ENCODE measurements at regions of chr9 and their contacts with region 1.

Region 1: GRCh38 chr9:88322906-88323566 is 65.2 kb upstream of the SPIN1 start:
- DNase-seq: peak; percentile 59
- ATAC-seq: peak; percentile 98
- H3K4me3 Mint-ChIP-seq: no peak overlapping the region
- H3K27ac Mint-ChIP-seq: peak overlapping the region; percentile 84
- H3K4me1 Mint-ChIP-seq: peaks cover 30% of the 10 kb centered on the region
- H3K27me3 Mint-ChIP-seq: no peaks in the 10 kb centered on the region

Region 2: GRCh38 chr9:88266416-88266815 is 56.6 kb before region 1 on chr9:
- CTCF ChIA-PET with region 1: no interaction called
- POLR2A ChIA-PET with region 1: no interaction called
- intact Hi-C with region 1: no loop called
- DNase-seq: no peak
- ATAC-seq: no peak
- H3K4me3 Mint-ChIP-seq: no peak overlapping the region
- H3K27ac Mint-ChIP-seq: no peak overlapping the region
- H3K4me1 Mint-ChIP-seq: peaks cover 3% of the 10 kb centered on the region
- H3K27me3 Mint-ChIP-seq: no peaks in the 10 kb centered on the region

Region 3: DNA sequence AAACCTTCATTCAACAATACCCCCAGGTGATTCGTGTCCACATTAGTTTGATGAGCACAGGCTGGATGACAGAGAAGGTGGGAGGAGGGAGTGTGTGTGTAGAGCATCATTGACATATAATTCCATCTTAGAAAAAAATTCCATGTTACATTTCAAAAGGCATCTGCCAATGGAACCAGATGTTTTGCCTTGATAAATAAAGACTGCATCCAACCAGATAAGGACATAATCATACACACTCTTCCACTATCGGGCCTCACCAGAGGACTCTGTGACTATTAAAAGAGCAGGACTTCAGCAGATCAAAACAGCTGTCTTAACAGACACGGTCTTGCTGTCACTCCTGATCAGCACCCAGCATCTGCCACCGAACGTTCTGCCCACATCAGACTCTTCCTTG is 31.2 kb before region 1 on chr9:
- CTCF ChIA-PET with region 1: no interaction called
- POLR2A ChIA-PET with region 1: no interaction called
- intact Hi-C with region 1: no loop called
- DNase-seq: no peak
- ATAC-seq: no peak
- H3K4me3 Mint-ChIP-seq: no peak overlapping the region
- H3K27ac Mint-ChIP-seq: no peak overlapping the region
- H3K4me1 Mint-ChIP-seq: no peaks in the 10 kb centered on the region
- H3K27me3 Mint-ChIP-seq: no peaks in the 10 kb centered on the region

Region 4: DNA sequence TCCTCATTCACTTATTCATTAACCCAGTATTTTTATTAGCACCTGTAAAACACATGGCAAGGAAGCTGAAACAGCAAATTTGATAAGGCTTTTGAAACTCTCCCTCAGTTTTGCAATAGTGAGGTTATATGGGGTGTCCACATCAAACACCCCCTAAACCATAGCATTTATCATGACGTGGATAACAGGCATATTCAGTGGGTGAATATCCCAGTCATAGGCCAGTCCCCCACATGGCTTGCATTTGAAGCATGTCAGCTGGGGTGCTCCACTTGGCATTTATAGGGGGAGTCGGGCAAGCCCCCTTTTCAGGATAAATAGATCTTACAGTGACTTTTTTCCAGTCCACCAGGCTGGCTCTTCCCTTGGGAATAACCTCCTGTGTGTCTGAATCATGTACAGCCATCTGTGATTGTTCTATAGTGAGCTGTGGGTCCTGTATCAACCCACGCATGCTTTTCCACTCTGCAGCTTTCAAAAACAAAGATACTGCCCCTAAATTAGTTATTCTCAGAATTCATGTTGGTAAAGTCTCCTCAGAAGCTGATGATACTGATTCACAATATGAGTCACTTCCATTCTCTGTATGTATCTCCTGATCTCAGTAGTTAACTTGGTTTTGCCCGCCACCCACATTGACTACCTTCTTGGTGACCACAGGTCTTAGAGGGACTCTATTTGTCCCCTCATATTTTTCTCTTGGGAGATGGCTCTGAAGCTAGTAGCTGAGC is 19.1 kb before region 1 on chr9:
- CTCF ChIA-PET with region 1: interaction called, 3 read pairs
- POLR2A ChIA-PET with region 1: no interaction called
- intact Hi-C with region 1: loop called in 1 of 2 experiments (anchors 1 kb)
- DNase-seq: peak; percentile 81
- ATAC-seq: peak; percentile 91
- H3K4me3 Mint-ChIP-seq: no peak overlapping the region
- H3K27ac Mint-ChIP-seq: peak overlapping the region; percentile 68
- H3K4me1 Mint-ChIP-seq: peaks cover 27% of the 10 kb centered on the region
- H3K27me3 Mint-ChIP-seq: peaks cover 18% of the 10 kb centered on the region

Measured in activated CD4-positive, alpha-beta T cell treated with anti-CD3 and anti-CD28 coated beads for 36 hours (primary cell).